GM18951 (cell line): ENCODE measurements at regions of chr17 and their contacts with region 1.

Region 1: DNA sequence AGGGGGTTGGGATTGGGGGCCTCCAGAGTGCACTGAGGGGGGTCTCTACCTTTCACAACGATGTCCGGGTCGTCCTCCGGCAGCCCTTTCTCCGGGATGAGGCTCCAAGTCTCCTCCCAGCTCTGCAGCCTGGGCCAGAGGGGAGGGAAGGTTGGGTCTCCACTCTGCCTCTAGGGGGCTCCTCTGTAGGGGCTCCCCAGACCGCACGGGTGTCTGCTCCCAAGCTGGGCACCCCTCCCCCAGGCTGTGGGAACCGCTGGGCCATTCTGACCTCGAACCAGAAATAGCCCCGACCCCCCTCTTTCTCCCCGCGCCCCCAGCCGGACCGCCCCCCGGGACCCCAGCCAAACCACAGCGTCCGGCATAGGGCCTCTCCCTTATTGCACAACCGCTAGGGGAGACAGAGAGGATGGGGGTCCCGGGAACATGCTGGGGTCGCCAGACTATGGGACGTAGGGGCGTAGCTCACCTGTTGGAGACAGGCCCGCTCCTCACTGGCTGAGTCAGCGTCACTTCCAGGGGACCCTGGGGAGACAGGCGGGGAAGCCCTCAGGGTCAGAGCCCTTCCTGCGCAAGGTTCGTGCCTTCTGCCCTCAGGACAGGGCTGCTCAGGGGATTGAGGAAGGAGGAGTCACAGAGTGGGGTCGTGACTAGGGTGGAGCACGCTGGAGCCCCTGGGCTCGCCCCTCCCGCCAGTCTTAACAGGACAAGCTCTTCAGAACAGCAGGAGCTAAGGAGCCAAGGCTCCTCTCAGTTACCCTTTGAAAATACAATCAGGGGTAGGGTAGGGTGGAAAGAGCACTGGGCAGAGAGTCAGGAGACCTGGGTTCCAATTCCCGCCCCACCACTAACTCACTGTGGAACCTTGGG is 2.7 kb downstream of the PLEKHH3 start:
- POLR2A ChIP-seq: peak; percentile 25

Region 2: GRCh38 chr17:42571435-42572225 is 102.5 kb before region 1 on chr17:
- in situ Hi-C with region 1: loop called (anchors 5 kb)
- POLR2A ChIP-seq: no peak